Heart left ventricle (tissue), 16 donors: ENCODE measurements at regions of chr11 and their contacts with region 1.

Region 1: DNA sequence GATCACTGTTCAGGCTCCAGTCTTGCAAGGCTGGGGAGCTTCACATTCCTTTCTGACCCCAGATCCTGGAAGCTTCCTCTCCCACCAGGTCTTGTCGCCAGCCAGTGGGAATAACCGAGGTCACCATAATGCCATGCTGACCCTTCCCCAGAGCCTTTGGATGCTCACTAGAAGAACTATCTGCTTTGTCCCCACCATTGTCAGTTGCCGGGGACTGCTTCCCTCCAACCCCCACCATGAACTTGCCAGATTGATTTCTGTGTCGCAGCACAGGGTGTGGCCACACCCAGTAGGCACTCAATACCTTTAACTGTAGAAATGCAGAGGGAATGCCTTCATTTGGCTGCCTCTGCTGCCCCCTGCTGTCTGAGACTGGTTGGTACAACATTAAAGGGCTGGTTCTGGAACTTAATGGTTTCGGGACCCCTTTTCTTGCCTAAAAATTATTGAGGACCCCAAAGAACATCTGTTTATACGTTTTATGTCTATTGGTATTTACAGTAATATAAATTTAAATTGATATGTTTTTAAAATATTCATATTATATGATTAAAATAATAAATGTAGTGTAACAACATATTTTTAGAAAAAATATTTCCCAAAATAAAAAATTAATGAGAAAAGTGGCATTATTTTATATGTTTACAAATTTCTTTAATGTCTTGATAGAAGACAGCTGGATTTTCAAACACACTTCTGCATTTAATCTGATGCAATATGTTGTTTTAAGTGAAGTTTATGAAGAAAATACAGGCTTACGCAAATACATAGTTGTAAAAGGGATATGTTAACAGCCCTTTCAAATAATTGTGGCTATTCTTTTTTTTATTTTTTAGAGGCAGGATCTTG is 6.7 kb upstream of the GDPD5 start:
- DNase-seq: peak in 4 of 5 donors; percentile 54 to 77 (median 62)
- ATAC-seq: peak; percentile 28 to 58 (median 56)
- H3K4me3 ChIP-seq: no peak overlapping the region
- H3K27ac ChIP-seq: no peak overlapping the region
- H3K4me1 ChIP-seq: peaks cover 0 to 23% (median 7%) of the 10 kb centered on the region in 12 donors
- H3K27me3 ChIP-seq: no peaks in the 10 kb centered on the region
- CTCF ChIP-seq: peak; percentile 83 to 98 (median 90)
- POLR2A ChIP-seq: no peak

Region 2: DNA sequence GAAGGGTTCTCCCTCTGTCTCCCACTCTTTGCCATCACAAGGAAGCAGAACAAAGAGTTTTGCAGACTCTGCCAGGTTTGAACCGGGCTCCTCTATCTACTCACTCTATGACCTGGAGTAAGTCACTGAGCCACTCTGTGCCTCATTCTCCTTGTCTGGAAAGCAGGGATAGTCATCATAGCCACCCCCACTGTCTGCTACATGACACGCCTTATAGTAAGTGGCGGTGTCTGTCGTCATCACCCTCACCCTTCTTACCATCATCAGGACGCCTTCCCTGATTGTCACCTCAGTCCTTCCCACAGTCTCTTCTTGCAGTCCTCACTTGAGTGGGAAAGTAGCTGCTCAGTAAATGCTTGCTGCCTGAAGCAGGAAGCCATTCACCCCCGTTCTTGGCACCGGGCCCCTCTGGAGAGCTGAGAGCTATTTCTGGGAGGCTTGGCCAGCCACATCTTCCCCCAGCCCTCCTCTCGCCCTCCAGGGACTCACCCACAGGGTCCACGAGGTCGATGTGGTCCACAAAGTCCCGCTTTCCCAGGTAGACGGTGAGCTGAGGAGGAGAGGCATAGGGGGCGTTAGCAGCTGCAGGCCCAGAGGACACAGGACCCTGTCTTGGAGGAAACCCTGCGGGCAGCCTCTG is 245.5 kb before region 1 on chr11:
- intact Hi-C with region 1: loop called in 5 of 10 experiments (anchors 5 to 10 kb)
- DNase-seq: peak in 1 of 5 donors; percentile 33
- ATAC-seq: peak in 1 of 4 donors; percentile 21
- H3K4me3 ChIP-seq: no peak overlapping the region
- H3K27ac ChIP-seq: no peak overlapping the region
- H3K4me1 ChIP-seq: peaks cover 0 to 5% (median 0%) of the 10 kb centered on the region in 12 donors
- H3K27me3 ChIP-seq: no peaks in the 10 kb centered on the region
- CTCF ChIP-seq: no peak
- POLR2A ChIP-seq: no peak

Region 3: GRCh38 chr11:75388386-75389275 is 143.8 kb before region 1 on chr11:
- intact Hi-C with region 1: loop called in 7 of 10 experiments (anchors 1 to 5 kb)
- DNase-seq: peak; percentile 54 to 77 (median 68)
- ATAC-seq: peak; percentile 35 to 76 (median 72)
- H3K4me3 ChIP-seq: no peak overlapping the region
- H3K27ac ChIP-seq: no peak overlapping the region
- H3K4me1 ChIP-seq: peaks cover 0 to 23% (median 5%) of the 10 kb centered on the region in 12 donors
- H3K27me3 ChIP-seq: peaks cover 0 to 4% (median 0%) of the 10 kb centered on the region in 9 donors
- CTCF ChIP-seq: peak; percentile 75 to 88 (median 80)
- POLR2A ChIP-seq: no peak

Region 4: DNA sequence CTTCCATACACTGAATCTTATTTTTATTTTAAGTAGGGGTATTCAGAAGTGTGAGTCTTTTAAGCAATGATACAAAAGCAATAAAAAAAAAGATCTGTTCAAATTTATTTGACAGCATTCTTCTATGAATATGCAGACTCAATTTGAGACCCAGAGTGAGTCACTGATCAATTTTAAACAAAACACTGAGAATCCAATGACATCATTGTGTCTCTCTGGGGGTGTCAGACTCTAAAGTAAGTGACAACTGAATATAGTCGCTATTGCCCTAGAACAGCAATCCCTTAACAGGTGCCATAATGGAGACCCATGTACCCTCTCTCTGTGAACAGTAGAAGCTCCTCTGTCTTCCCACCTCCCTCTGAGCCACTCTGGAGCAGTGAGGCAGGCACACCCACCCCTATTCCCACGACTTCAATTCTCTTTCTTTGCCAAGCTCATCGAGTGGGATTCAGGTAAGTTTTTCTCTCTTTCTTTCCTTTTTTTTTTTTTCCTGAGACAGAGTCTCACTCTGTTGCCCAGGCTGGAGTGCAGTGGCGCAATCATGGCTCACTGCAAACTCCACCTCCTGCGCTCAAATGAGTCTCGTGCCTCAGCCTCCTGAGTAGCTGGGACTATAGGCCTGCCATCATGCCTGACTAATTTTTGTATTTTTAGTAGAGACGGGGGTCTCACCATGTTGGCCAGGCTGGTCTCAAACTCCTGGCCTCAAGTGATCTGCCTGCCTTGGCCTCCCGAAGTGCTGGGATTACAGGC is 138.2 kb before region 1 on chr11:
- intact Hi-C with region 1: loop called in 8 of 10 experiments (anchors 2 to 5 kb)
- DNase-seq: no peak
- ATAC-seq: no peak
- H3K4me3 ChIP-seq: no peak overlapping the region
- H3K27ac ChIP-seq: no peak overlapping the region
- H3K4me1 ChIP-seq: peaks cover 0 to 3% (median 0%) of the 10 kb centered on the region in 12 donors
- H3K27me3 ChIP-seq: no peaks in the 10 kb centered on the region
- CTCF ChIP-seq: no peak
- POLR2A ChIP-seq: no peak

Region 5: GRCh38 chr11:75399344-75400145 is 132.9 kb before region 1 on chr11 and contains the start of gene RPS3:
- intact Hi-C with region 1: loop called in 5 of 10 experiments (anchors 5 kb)
- DNase-seq: peak; percentile 92 to 95 (median 94)
- ATAC-seq: peak; percentile 91 to 98 (median 97)
- H3K4me3 ChIP-seq: peak within 1 kb of the TSS; percentile 55 to 96 (median 76)
- H3K27ac ChIP-seq: peak within 1 kb of the TSS; percentile 81 to 95 (median 88)
- H3K4me1 ChIP-seq: peaks cover 0 to 35% (median 26%) of the 10 kb centered on the region in 12 donors
- H3K27me3 ChIP-seq: no peaks in the 10 kb centered on the region
- CTCF ChIP-seq: peak in 3 of 12 donors; percentile 30 to 44 (median 35)
- POLR2A ChIP-seq: peak in 1 of 2 donors; percentile 92
- total RNA-seq, gene RPS3: 434 to 1,232 (median 990) TPM

Region 6: GRCh38 chr11:75445315-75445953 is 87.0 kb before region 1 on chr11:
- intact Hi-C with region 1: loop called (anchors 1 to 2 kb)
- DNase-seq: peak in 4 of 5 donors; percentile 58 to 71 (median 63)
- ATAC-seq: peak in 3 of 4 donors; percentile 64 to 74 (median 73)
- H3K4me3 ChIP-seq: no peak overlapping the region
- H3K27ac ChIP-seq: no peak overlapping the region
- H3K4me1 ChIP-seq: peaks cover 0 to 7% (median 0%) of the 10 kb centered on the region in 12 donors
- H3K27me3 ChIP-seq: no peaks in the 10 kb centered on the region
- CTCF ChIP-seq: peak; percentile 92 to 98 (median 94)
- POLR2A ChIP-seq: no peak

Region 7: DNA sequence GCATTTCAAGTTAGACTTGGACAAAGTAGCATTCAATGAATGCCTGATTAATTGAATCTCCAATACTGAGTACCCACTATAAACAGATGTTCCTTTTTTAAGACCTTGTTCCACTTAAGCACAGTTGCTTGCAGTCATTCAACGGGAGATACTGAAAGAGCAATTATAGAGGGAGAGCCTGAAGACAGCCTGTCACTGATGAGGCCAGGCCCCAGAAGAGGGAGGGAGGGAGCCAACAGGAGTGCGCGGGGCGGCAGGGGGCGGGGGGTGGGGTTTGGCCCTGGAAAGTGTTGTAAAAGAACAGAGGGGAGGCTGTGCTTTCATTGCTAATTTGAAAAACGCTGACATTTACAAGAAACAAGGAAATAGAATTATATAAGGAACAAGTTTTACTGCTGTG is 83.3 kb after region 1 on chr11:
- intact Hi-C with region 1: no loop called
- DNase-seq: no peak
- ATAC-seq: no peak
- H3K4me3 ChIP-seq: no peak overlapping the region
- H3K27ac ChIP-seq: no peak overlapping the region
- H3K4me1 ChIP-seq: peaks cover 0 to 8% (median 0%) of the 10 kb centered on the region in 12 donors
- H3K27me3 ChIP-seq: no peaks in the 10 kb centered on the region
- CTCF ChIP-seq: no peak
- POLR2A ChIP-seq: no peak